ENCODE measurements at regions of chr7 and their contacts with region 1.

Region 1: DNA sequence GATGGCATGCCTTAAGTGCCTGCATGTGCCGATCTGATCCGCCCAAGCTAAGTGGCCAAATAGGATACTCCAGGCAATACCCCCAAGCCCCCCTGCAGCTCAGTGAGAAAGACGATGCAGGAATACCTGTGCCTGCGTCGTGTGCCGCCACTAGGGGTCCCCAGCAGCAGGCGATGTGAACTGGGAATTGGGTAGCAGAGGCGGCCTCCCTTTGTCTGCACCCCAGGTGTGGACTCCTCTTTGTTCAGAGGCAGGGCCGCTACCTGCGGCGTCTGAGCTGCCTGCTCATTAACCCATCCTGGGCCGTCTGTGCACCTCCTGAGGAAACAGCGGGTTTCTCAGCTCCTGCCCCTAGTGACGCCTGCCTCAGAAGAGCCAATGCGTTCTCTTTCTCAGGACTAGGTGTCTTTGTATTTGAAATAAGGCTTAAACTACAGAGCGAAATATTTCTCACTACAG is 4.8 kb upstream of the CHN2 start:
- DNase-seq: peak; percentile 74
- ATAC-seq: peak; percentile 75
- H3K4me3 ChIP-seq: peak overlapping the region; percentile 51 to 72 (median 55)
- H3K27ac ChIP-seq: peak overlapping the region; percentile 84
- H3K4me1 ChIP-seq: peaks cover 54% of the 10 kb centered on the region
- H3K27me3 ChIP-seq: no peaks in the 10 kb centered on the region; a peak in 1 of 5 replicates
- CTCF ChIP-seq: peak; percentile 97
- EP300 ChIP-seq: 0 out of 4 replicates have a peak, but pooled peaks of 1 of the 2 experiments have one; percentile 22
- POLR2A ChIP-seq: no peak
- RAD21 ChIP-seq: peak; percentile 94

Region 2: GRCh38 chr7:29140873-29141468 is 48.8 kb before region 1 on chr7:
- CTCF ChIA-PET with region 1: no interaction called
- POLR2A ChIA-PET with region 1: interaction called, 23 read pairs
- in situ Hi-C with region 1: no loop called
- intact Hi-C with region 1: no loop called
- DNase-seq: peak; percentile 90
- ATAC-seq: peak; percentile 82
- H3K4me3 ChIP-seq: no peak overlapping the region
- H3K27ac ChIP-seq: peak overlapping the region; percentile 39
- H3K4me1 ChIP-seq: peaks cover 78% of the 10 kb centered on the region
- H3K27me3 ChIP-seq: no peaks in the 10 kb centered on the region; a peak in 1 of 5 replicates
- CTCF ChIP-seq: 0 out of 2 replicates have a peak, but pooled peaks have one; percentile 22
- EP300 ChIP-seq: peak in 1 of 2 experiments; percentile 95; a peak in 2 of 4 replicates
- POLR2A ChIP-seq: no peak
- RAD21 ChIP-seq: no peak

Region 3: DNA sequence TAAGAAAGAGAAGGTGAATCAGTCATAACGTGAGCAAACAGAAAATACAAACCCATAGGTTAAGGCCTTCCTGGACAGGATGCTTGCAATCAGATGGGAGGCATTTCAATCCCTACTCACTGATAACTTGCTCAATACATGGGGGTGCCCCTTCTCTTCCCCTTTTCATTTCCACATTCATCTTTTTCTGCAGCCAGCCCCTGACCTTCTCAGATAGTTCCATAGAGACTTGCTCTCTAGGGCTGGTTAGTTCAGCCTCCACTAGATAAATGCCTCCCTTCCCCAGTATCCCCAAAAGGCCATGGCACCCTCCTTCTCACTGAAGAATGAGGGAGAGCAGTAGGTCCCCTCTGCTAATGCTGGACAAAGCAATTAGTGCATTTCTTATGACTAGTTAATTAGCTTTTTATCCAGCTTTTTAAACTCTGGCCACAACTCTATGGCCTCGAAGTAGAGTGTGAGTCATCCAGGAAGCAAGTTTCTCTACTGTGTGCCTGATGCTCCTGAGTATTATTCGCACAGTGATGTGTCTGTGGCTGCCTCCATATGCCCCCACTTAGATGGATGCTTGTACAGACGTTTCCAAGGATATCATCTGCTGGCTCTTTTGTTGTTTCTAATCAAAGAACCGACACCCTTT is 17.5 kb after region 1 on chr7:
- CTCF ChIA-PET with region 1: no interaction called
- POLR2A ChIA-PET with region 1: interaction called, 42 read pairs
- in situ Hi-C with region 1: no loop called
- intact Hi-C with region 1: loop called (anchors 2 kb)
- DNase-seq: peak; percentile 67
- ATAC-seq: peak; percentile 56
- H3K4me3 ChIP-seq: no peak overlapping the region
- H3K27ac ChIP-seq: peak overlapping the region; percentile 85
- H3K4me1 ChIP-seq: peaks cover 86% of the 10 kb centered on the region
- H3K27me3 ChIP-seq: no peaks in the 10 kb centered on the region
- CTCF ChIP-seq: no peak
- EP300 ChIP-seq: no peak
- POLR2A ChIP-seq: no peak
- RAD21 ChIP-seq: no peak

Region 4: GRCh38 chr7:29289156-29290021 is 99.6 kb after region 1 on chr7:
- CTCF ChIA-PET with region 1: no interaction called
- POLR2A ChIA-PET with region 1: interaction called, 14 read pairs
- in situ Hi-C with region 1: no loop called
- intact Hi-C with region 1: loop called (anchors 5 kb)
- DNase-seq: peak; percentile 63
- ATAC-seq: peak; percentile 23; the same call in 2 of the 3 replicates
- H3K4me3 ChIP-seq: no peak overlapping the region; a peak in 1 of 6 replicates
- H3K27ac ChIP-seq: peak overlapping the region; percentile 84
- H3K4me1 ChIP-seq: peaks cover 86% of the 10 kb centered on the region
- H3K27me3 ChIP-seq: no peaks in the 10 kb centered on the region
- CTCF ChIP-seq: no peak
- EP300 ChIP-seq: peak in 1 of 2 experiments; percentile 67; a peak in 2 of 4 replicates
- POLR2A ChIP-seq: no peak
- RAD21 ChIP-seq: no peak

Region 5: GRCh38 chr7:29345600-29345999 is 155.8 kb after region 1 on chr7:
- CTCF ChIA-PET with region 1: interaction called, 10 read pairs
- POLR2A ChIA-PET with region 1: interaction called, 3 read pairs
- in situ Hi-C with region 1: no loop called
- intact Hi-C with region 1: loop called (anchors 1 kb)
- DNase-seq: peak; percentile 38
- ATAC-seq: peak; percentile 87
- H3K4me3 ChIP-seq: no peak overlapping the region
- H3K27ac ChIP-seq: no peak overlapping the region
- H3K4me1 ChIP-seq: peaks cover 41% of the 10 kb centered on the region
- H3K27me3 ChIP-seq: no peaks in the 10 kb centered on the region
- CTCF ChIP-seq: peak; percentile 81
- EP300 ChIP-seq: no peak
- POLR2A ChIP-seq: no peak
- RAD21 ChIP-seq: peak; percentile 53

Region 6: GRCh38 chr7:29684787-29685650 is 495.2 kb after region 1 on chr7:
- CTCF ChIA-PET with region 1: no interaction called
- POLR2A ChIA-PET with region 1: no interaction called
- in situ Hi-C with region 1: no loop called
- intact Hi-C with region 1: no loop called
- DNase-seq: peak; percentile 56
- ATAC-seq: peak; percentile 95
- H3K4me3 ChIP-seq: peak overlapping the region; percentile 74 to 81 (median 77); a peak in 5 of 6 replicates
- H3K27ac ChIP-seq: peak overlapping the region; percentile 84
- H3K4me1 ChIP-seq: no peaks in the 10 kb centered on the region
- H3K27me3 ChIP-seq: no peaks in the 10 kb centered on the region
- CTCF ChIP-seq: no peak; the same call in 1 of the 2 replicates
- EP300 ChIP-seq: no peak
- POLR2A ChIP-seq: peak in 1 of 2 experiments; percentile 24; a peak in 1 of 4 replicates
- RAD21 ChIP-seq: 0 out of 2 replicates have a peak, but pooled peaks have one; percentile 9